Activated CD4-positive, alpha-beta T cell treated with anti-CD3 and anti-CD28 coated beads, Interleukin-2, amount 10 ng/mL, durations not matched to agents 24 days and 14 days (primary cell): ENCODE measurements at regions of chr6 and their contacts with region 1.

Region 1: DNA sequence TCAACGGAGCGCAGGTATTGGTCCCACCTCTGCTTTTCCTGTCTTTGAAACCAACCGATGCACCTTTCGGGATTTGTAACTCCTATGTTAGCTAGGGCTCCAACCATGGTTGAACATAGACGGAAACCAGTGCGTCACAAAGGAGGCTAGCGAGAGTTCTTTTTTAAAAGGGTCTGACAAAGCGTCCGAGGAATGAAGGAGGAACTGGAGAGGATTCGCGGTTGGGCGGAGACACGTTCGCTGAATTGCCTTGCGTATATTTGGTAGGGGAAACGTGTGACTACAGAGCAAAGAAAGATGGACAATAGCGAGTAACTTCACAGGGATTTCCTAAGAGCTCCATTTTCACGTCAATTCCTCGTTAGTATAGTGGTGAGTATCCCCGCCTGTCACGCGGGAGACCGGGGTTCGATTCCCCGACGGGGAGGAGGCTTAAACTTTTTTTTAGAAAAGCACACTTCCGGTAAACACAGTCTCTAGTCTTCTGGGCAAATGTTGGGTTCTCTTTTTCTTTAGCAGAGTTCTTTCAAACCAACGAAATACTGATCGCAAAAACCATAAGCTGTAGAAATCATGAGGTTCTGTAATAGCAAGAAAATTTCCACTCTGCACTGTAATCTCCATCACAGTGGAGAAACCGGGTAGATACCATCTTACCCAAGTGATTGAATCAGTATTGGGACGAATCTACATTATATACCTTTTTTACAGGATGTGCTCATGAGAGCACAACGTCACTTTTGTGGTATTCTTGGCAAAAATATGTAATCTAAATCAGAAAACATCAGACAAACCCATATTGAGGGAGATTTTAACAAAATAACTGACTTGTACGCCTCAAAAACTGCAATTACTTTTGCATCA is 6.6 kb upstream of the ZNF184 start:
- DNase-seq: peak; percentile 96
- H3K4me3 Mint-ChIP-seq: no peak overlapping the region
- H3K27ac Mint-ChIP-seq: no peak overlapping the region
- H3K4me1 Mint-ChIP-seq: peaks cover 6% of the 10 kb centered on the region
- H3K27me3 Mint-ChIP-seq: peaks cover 9% of the 10 kb centered on the region

Region 2: DNA sequence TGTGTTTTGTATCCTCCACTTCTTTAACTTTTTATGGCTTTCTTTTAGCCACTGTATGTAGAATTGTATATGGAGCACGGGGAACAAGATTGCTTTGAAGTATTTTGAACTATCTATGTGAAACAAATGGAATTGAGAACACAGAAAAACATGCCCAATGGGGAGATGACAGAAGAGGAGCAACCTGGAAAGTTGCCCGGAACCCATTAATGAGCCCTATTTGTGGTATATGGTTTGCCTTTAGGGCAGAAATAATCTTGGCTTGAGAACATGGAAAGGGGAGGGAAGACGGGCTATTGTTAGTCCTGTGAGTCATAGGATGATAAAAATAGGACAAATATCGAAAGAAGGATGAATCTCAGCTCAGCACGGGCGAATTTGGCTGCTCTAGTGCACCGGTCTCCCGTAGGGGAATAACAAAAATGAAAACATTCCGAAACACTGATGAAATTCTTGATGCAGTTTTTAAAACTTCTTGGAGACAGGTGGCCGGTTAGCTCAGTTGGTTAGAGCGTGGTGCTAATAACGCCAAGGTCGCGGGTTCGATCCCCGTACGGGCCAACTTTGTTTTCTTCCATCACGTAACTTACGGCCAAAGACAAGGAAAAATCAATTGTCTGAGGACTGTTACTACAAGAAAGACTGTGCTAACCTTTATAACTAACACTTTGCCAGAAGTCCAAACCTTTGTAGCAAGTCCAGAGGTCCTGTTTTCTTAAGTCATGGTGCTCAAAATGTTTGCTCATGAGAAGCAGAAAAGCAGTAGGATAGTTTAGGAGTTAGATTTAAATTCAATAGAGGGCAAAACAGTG is 925.7 kb before region 1 on chr6:
- intact Hi-C with region 1: loop called (anchors 5 kb)
- DNase-seq: peak; percentile 94
- H3K4me3 Mint-ChIP-seq: no peak overlapping the region
- H3K27ac Mint-ChIP-seq: no peak overlapping the region
- H3K4me1 Mint-ChIP-seq: peaks cover 22% of the 10 kb centered on the region
- H3K27me3 Mint-ChIP-seq: peaks cover 2% of the 10 kb centered on the region

Region 3: GRCh38 chr6:27312146-27312949 is 167.2 kb before region 1 on chr6 and contains the start of gene POM121L2:
- intact Hi-C with region 1: loop called (anchors 2 kb)
- DNase-seq: peak; percentile 88
- H3K4me3 Mint-ChIP-seq: peak within 1 kb of the TSS; percentile 85
- H3K27ac Mint-ChIP-seq: peak within 1 kb of the TSS; percentile 9
- H3K4me1 Mint-ChIP-seq: peaks cover 8% of the 10 kb centered on the region
- H3K27me3 Mint-ChIP-seq: peaks cover 70% of the 10 kb centered on the region
- total RNA-seq, gene POM121L2: not detected in 2 replicates

Region 4: DNA sequence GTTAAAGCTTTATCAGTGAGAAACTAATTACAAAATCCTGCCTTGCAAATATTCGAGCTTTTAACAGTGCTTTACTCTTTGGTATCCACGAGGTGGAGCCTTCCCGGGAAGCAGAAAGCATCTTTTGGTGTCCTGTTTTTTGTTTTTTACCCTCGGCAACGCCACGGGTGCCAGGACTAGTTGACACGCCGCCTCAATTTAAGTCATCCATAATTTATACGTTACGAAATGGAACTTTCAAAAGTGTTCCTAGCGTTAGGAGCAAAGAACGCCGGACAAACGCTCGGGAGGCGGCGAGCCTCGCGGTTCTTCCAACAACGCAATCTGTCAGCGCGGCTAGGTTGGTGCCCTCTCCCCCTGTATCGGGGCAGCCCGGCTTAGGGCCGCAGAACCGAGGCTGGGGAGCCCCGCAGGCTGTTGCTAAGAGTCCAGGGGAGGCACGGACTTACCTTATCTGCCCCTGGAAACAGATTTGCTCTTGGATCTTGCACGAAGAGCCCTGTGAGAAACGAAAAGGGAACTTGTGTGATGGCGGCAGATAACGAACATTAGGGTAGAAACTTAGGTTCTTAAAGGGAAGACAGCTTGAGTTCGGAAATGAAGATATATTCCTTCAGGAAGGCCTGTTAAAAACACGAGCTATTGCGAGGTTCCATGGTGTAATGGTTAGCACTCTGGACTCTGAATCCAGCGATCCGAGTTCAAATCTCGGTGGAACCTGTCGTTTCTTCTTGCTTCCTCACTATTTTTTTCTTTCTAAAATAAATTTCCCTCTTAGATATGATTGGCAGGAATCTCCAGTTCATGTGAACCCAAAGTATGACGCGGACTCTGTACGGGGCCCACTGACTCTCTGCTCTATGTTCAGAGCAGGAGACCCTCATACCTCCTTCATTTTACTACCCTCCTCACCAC is 39.6 kb after region 1 on chr6:
- intact Hi-C with region 1: loop called (anchors 1 kb)
- DNase-seq: peak; percentile 84
- H3K4me3 Mint-ChIP-seq: peak overlapping the region; percentile 93
- H3K27ac Mint-ChIP-seq: peak overlapping the region; percentile 85
- H3K4me1 Mint-ChIP-seq: peaks cover 13% of the 10 kb centered on the region
- H3K27me3 Mint-ChIP-seq: peaks cover 33% of the 10 kb centered on the region

Region 5: GRCh38 chr6:27809939-27810767 is 330.6 kb after region 1 on chr6:
- intact Hi-C with region 1: loop called (anchors 2 kb)
- DNase-seq: peak; percentile 96
- H3K4me3 Mint-ChIP-seq: peak overlapping the region; percentile 87
- H3K27ac Mint-ChIP-seq: peak overlapping the region; percentile 96
- H3K4me1 Mint-ChIP-seq: peaks cover 67% of the 10 kb centered on the region
- H3K27me3 Mint-ChIP-seq: no peaks in the 10 kb centered on the region

Region 6: GRCh38 chr6:28940858-28941680 is 1461.5 kb after region 1 on chr6:
- intact Hi-C with region 1: loop called (anchors 2 kb)
- DNase-seq: peak; percentile 94
- H3K4me3 Mint-ChIP-seq: peak overlapping the region; percentile 92
- H3K27ac Mint-ChIP-seq: peak overlapping the region; percentile 96
- H3K4me1 Mint-ChIP-seq: peaks cover 49% of the 10 kb centered on the region
- H3K27me3 Mint-ChIP-seq: peaks cover 7% of the 10 kb centered on the region